Esophagus muscularis mucosa (tissue), 4 donors: ENCODE measurements at regions of chr15 and their contacts with region 1.

Region 1: GRCh38 chr15:60935130-60935529 is 294.0 kb downstream of the RORA start:
- DNase-seq: no peak
- H3K4me3 ChIP-seq: no peak overlapping the region
- H3K27ac ChIP-seq: peak overlapping the region; percentile 75 to 86 (median 80)
- H3K4me1 ChIP-seq: peaks cover 3 to 58% (median 57%) of the 10 kb centered on the region in 4 donors
- H3K27me3 ChIP-seq: no peaks in the 10 kb centered on the region
- CTCF ChIP-seq: no peak
- EP300 ChIP-seq: no peak
- POLR2A ChIP-seq: no peak

Region 2: GRCh38 chr15:61034678-61035291 is 99.7 kb after region 1 on chr15:
- intact Hi-C with region 1: loop called (anchors 5 kb)
- DNase-seq: no peak
- H3K4me3 ChIP-seq: peak overlapping the region; percentile 3 to 31 (median 12)
- H3K27ac ChIP-seq: peak overlapping the region; percentile 54 to 70 (median 67)
- H3K4me1 ChIP-seq: peaks cover 22 to 76% (median 51%) of the 10 kb centered on the region in 4 donors
- H3K27me3 ChIP-seq: no peaks in the 10 kb centered on the region
- CTCF ChIP-seq: no peak
- EP300 ChIP-seq: no peak
- POLR2A ChIP-seq: no peak